ENCODE measurements at regions of chr1 and their contacts with region 1.

Region 1: DNA sequence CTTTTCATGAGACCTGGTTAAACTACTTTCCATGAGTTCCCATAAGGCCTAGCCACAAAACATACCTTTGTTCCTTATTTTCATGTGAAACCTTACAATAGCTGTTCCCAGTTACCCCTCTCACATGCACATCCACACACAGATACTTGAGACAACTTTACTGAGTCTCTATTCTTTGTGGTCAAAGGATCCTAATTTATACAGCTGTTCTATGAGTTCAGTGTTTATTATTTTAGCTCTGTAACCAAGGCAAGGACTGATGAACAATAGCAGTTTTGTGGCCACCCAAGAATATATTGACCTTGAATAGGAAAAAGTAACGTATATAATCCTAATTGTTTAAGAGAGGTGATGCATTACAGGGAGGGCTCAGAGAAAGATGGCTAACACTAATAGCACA is 160.5 kb upstream of the CACYBP start:
- DNase-seq: no peak
- H3K4me3 ChIP-seq: no peak overlapping the region
- H3K27ac ChIP-seq: no peak overlapping the region
- H3K4me1 ChIP-seq: no peaks in the 10 kb centered on the region
- H3K27me3 ChIP-seq: no peaks in the 10 kb centered on the region
- CTCF ChIP-seq: no peak
- EP300 ChIP-seq: no peak
- POLR2A ChIP-seq: no peak

Region 2: DNA sequence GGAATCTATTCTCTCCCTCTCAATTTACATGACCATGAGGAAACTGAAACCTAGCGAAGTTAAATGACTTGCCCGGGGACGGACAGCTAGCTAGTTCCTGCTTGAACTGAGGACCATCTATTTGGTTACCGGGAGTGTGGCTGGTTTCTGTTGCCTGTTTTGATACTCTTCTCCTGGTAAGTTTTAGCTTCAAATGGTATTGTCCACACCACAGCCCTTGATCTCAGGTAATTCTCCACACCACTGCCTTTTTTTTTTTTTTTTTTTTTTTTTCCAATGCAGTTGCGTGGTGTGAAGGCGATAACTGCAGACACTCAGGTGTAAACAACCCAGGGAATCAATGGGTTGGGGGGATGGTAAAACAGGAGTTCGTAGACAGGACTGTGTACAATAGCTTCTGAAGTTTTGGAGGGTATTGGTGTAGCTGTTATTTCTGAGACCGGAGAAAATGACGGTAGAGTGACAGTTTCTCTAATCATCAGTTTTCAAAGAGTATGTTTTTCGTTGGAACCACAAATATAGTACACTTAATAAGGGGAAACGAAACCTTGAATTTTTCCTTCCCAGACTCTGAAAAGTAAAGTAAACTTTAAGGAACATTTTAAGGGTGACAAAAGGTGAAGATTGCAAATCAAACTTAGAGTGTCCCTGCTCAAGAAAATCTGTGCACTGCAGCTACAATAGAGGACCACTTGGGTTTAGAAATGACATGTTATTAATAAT is 35.3 kb after region 1 on chr1:
- intact Hi-C with region 1: no loop called
- DNase-seq: no peak
- H3K4me3 ChIP-seq: peak overlapping the region in 3 of 4 donors; percentile 11 to 19 (median 14)
- H3K27ac ChIP-seq: no peak overlapping the region
- H3K4me1 ChIP-seq: peaks cover 0 to 3% (median 0%) of the 10 kb centered on the region in 4 donors
- H3K27me3 ChIP-seq: no peaks in the 10 kb centered on the region
- CTCF ChIP-seq: no peak
- EP300 ChIP-seq: no peak
- POLR2A ChIP-seq: no peak

Region 3: DNA sequence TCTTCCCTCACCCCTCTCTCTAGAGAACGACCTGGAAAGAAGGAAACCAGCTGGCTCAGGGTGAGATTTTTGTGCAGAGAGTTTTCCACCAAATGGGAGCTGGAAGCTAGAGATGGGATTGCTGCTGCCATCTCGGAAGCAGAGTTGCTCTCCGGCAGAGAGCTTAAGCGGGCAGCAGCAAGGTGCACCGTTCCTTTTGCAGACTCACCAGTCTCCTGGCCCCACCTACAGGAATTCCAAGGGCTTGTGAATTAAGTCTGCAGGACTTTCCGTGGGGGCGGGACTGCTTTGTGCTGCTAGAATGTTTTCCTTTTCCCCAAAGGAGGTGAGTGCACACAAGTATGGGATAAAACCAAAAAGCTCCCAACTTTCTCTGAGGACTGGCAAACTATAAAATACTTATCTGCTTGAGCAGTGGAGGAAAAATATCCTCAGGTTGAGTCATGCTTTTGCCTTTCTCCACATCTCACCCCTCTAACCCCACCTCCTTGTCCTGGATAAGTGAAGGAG is 382.5 kb after region 1 on chr1:
- intact Hi-C with region 1: loop called (anchors 10 kb)
- DNase-seq: peak; percentile 72
- H3K4me3 ChIP-seq: no peak overlapping the region
- H3K27ac ChIP-seq: no peak overlapping the region
- H3K4me1 ChIP-seq: peaks cover 6 to 32% (median 24%) of the 10 kb centered on the region in 4 donors
- H3K27me3 ChIP-seq: no peaks in the 10 kb centered on the region
- CTCF ChIP-seq: peak in 2 of 3 experiments; percentile 10 to 33
- EP300 ChIP-seq: no peak
- POLR2A ChIP-seq: no peak

Measured in esophagus muscularis mucosa (tissue), 4 donors.